ENCODE measurements at regions of chr17 and their contacts with region 1.

Region 1: GRCh38 chr17:52827526-52827925 is 669.0 kb upstream of the CA10 start:
- DNase-seq: peak; percentile 35
- H3K4me3 ChIP-seq: no peak overlapping the region
- H3K27ac ChIP-seq: peak overlapping the region in 2 of 4 donors; percentile 1 to 9
- H3K4me1 ChIP-seq: peaks cover 0 to 44% (median 9%) of the 10 kb centered on the region in 4 donors
- H3K27me3 ChIP-seq: no peaks in the 10 kb centered on the region
- CTCF ChIP-seq: no peak
- EP300 ChIP-seq: no peak
- POLR2A ChIP-seq: no peak

Region 2: GRCh38 chr17:52648995-52649394 is 178.5 kb before region 1 on chr17:
- in situ Hi-C with region 1: loop called in 1 of 4 experiments (anchors 25 kb)
- intact Hi-C with region 1: no loop called
- DNase-seq: peak; percentile 59
- H3K4me3 ChIP-seq: no peak overlapping the region
- H3K27ac ChIP-seq: no peak overlapping the region
- H3K4me1 ChIP-seq: no peaks in the 10 kb centered on the region
- H3K27me3 ChIP-seq: no peaks in the 10 kb centered on the region
- CTCF ChIP-seq: no peak
- EP300 ChIP-seq: no peak
- POLR2A ChIP-seq: no peak

Region 3: GRCh38 chr17:52709724-52710123 is 117.8 kb before region 1 on chr17:
- in situ Hi-C with region 1: loop called in 1 of 4 experiments (anchors 25 kb)
- intact Hi-C with region 1: no loop called
- DNase-seq: no peak
- H3K4me3 ChIP-seq: no peak overlapping the region
- H3K27ac ChIP-seq: no peak overlapping the region
- H3K4me1 ChIP-seq: no peaks in the 10 kb centered on the region
- H3K27me3 ChIP-seq: no peaks in the 10 kb centered on the region
- CTCF ChIP-seq: no peak
- EP300 ChIP-seq: no peak
- POLR2A ChIP-seq: no peak

Region 4: GRCh38 chr17:53012364-53012763 is 184.8 kb after region 1 on chr17:
- in situ Hi-C with region 1: no loop called
- intact Hi-C with region 1: no loop called
- DNase-seq: no peak
- H3K4me3 ChIP-seq: no peak overlapping the region
- H3K27ac ChIP-seq: no peak overlapping the region
- H3K4me1 ChIP-seq: no peaks in the 10 kb centered on the region
- H3K27me3 ChIP-seq: no peaks in the 10 kb centered on the region
- CTCF ChIP-seq: no peak
- EP300 ChIP-seq: no peak
- POLR2A ChIP-seq: no peak

Measured in transverse colon (tissue), 4 donors.